MCF 10A (cell line): ENCODE measurements at regions of chr12 and their contacts with region 1.

Region 1: GRCh38 chr12:59808317-59808910 is 212.6 kb downstream of the SLC16A7 start:
- DNase-seq: peak; percentile 51
- H3K4me3 Mint-ChIP-seq: no peak overlapping the region
- H3K27ac Mint-ChIP-seq: no peak overlapping the region
- H3K4me1 Mint-ChIP-seq: peaks cover 7% of the 10 kb centered on the region
- H3K27me3 Mint-ChIP-seq: no peaks in the 10 kb centered on the region
- CTCF ChIP-seq: peak; percentile 68

Region 2: GRCh38 chr12:59403259-59403932 is 405.0 kb before region 1 on chr12:
- CTCF ChIA-PET with region 1: interaction called, 3 read pairs
- POLR2A ChIA-PET with region 1: no interaction called
- intact Hi-C with region 1: loop called (anchors 1 kb)
- DNase-seq: peak; percentile 83
- H3K4me3 Mint-ChIP-seq: peak overlapping the region; percentile 4
- H3K27ac Mint-ChIP-seq: no peak overlapping the region
- H3K4me1 Mint-ChIP-seq: peaks cover 10% of the 10 kb centered on the region
- H3K27me3 Mint-ChIP-seq: no peaks in the 10 kb centered on the region
- CTCF ChIP-seq: peak; percentile 84

Region 3: DNA sequence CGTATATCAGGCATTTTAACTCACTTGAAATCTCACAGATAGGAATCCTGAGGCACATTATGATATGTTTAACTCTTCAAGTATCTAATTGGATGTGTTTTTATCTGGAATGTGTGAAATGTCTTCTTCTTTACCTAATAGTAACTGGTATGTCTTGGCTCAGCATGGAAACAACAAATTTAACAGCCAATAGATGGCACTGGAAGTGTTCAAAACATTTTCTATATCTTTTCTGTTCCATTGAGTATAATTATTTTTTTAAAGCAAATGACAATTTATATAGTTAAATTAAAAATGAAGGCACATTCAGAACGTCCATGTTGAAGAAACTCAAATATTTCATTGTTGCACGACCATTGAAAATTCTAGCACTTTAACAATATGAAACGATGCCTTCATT is 377.1 kb before region 1 on chr12:
- CTCF ChIA-PET with region 1: interaction called, 5 read pairs
- POLR2A ChIA-PET with region 1: no interaction called
- intact Hi-C with region 1: loop called (anchors 1 kb)
- DNase-seq: peak; percentile 16
- H3K4me3 Mint-ChIP-seq: no peak overlapping the region
- H3K27ac Mint-ChIP-seq: no peak overlapping the region
- H3K4me1 Mint-ChIP-seq: no peaks in the 10 kb centered on the region
- H3K27me3 Mint-ChIP-seq: no peaks in the 10 kb centered on the region
- CTCF ChIP-seq: peak; percentile 29

Region 4: DNA sequence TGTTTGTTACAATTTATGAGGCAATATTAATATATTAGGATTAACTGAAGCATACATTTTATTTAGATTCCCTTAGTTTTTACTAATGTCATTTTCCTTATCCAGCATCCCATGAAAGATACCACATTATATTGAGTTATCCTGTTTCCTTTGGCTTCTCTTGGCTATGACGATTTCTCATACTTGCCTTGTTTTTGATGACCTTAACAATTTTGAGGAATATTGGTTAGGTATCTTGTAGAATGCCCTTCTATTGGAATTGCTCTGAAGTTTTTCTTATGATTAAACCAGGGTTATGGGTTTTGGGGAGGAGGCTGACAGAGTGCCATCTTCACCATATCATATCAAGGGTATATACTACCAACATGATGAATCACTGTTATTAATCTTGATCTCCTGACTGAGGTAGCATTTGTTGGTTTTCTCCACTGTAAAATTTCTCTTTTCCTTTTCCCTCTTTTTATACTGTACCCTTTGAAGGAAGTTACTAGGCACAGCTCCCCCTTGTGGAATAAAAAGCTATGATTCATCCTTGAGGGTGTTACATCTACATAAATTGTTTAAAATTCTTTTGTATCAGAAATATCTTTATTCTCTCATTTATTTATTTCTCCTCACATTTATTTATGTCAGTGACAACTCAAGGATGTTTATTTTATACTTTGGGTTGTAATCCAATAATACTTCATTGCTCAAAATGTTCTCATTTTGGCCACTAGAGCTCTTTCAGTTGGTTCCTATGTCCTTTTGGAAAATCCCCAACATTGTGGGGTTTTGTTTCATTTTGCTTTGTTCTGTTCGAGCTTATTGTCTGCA is 26.5 kb after region 1 on chr12:
- CTCF ChIA-PET with region 1: interaction called, 10 read pairs
- POLR2A ChIA-PET with region 1: no interaction called
- intact Hi-C with region 1: no loop called
- DNase-seq: peak; percentile 51
- H3K4me3 Mint-ChIP-seq: no peak overlapping the region
- H3K27ac Mint-ChIP-seq: no peak overlapping the region
- H3K4me1 Mint-ChIP-seq: no peaks in the 10 kb centered on the region
- H3K27me3 Mint-ChIP-seq: no peaks in the 10 kb centered on the region
- CTCF ChIP-seq: peak; percentile 25